HepG2 (cell line): ENCODE measurements at regions of chrX and their contacts with region 1.

Region 1: DNA sequence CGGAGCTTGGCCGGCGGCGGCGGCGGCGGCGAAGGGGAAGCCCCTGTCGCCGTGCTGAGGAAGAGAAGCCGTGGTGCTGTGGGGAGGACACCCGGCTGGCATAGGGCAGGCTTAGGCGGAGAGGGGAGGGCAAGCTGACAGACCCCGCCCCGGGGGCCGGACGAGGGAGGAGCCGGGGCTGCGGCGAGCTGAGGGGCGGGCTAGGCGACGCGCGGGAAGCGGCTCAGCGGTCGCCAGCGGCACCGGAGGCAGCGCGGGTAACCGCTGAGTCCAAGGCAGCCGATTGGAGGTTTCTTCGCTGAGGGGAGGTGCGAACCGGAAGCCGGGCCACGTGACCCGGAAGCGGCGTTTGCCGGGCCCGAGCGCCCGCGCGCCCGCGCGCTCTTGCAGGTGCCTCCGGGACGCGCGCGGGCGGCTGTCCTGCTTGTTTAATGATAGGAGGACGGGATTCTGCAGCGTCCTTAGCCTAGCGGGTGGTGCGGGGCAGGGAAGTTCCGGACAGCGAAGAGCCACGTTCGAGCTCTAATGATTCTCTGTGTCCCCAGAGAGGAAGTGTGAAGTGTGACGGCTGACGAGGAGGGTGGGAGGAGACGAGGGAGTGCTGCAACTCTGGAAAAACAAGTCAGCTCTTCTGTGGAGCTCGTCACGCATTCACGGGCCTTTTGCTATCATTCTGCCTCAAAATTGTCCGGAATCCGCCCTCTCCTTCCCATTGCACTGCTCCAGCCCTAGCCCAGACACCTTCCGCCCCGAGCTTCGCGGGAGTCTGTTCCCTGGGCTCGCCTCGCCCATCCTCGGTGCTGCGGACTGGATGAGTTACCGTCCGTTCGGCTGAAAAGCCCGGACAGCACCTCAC is at the start of gene AP1S2:
- DNase-seq: peak; percentile 80
- ATAC-seq: peak; percentile 97
- H3K4me3 ChIP-seq: peak within 1 kb of the TSS; percentile 67 to 74 (median 72)
- H3K27ac ChIP-seq: peak within 1 kb of the TSS; percentile 64
- H3K4me1 ChIP-seq: peaks cover 22% of the 10 kb centered on the region; the same call in 1 of the 2 replicates
- H3K27me3 ChIP-seq: peaks cover 0 to 3% of the 10 kb centered on the region in 2 experiments; a peak in 1 of 5 replicates
- CTCF ChIP-seq: no peak
- EP300 ChIP-seq: no peak
- POLR2A ChIP-seq: no peak; a peak in 1 of 4 replicates
- RAD21 ChIP-seq: no peak
- total RNA-seq, gene AP1S2: 18.8 and 22.7 TPM in 2 replicates

Region 2: DNA sequence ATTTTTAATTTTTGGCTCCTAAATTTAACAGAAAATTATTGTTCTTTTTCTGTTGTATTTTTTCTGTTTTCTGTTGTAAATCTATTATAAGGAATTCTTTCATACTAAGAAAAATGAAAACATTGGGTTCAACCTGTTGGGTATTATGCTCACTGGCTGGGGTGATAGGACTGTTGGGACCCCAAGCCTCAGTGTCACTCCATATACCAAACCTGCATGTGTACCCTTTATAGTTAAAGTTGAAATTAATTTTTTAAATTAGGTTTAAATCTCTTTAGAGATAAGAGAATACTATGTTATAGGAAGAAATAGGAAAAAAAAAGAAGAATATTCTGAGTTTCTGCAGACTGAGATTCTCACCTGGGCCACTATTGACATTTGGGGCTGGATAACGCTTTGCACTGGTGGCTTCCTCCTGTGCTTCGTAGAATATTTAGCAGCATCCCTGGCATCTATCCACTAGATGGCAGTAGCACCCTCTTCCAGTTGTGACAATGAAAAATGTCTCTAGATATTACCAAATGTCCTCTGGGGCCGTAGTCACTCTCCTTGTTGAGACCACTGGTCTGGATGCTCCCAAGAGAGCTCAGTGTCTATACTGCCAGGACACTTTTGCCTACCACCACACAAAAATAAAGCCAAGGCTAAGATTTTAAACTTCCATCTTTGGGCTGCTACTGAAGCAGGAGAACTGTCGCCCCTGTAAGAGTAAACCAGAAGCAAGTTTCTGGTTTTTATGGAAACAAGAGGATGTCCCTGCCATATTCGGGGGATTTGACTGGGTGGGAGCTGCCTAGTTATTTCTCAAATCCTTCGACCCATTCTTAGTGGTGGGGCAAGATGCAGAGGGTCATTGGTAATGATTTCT is 167.9 kb before region 1 on chrX:
- CTCF ChIA-PET with region 1: no interaction called
- POLR2A ChIA-PET with region 1: no interaction called
- in situ Hi-C with region 1: no loop called
- intact Hi-C with region 1: loop called (anchors 10 kb)
- DNase-seq: peak; percentile 46
- ATAC-seq: peak; percentile 80
- H3K4me3 ChIP-seq: no peak overlapping the region
- H3K27ac ChIP-seq: no peak overlapping the region
- H3K4me1 ChIP-seq: no peaks in the 10 kb centered on the region
- H3K27me3 ChIP-seq: no peaks in the 10 kb centered on the region
- CTCF ChIP-seq: peak; percentile 72
- EP300 ChIP-seq: no peak
- POLR2A ChIP-seq: no peak
- RAD21 ChIP-seq: 0 out of 2 replicates have a peak, but pooled peaks have one; percentile 23

Region 3: DNA sequence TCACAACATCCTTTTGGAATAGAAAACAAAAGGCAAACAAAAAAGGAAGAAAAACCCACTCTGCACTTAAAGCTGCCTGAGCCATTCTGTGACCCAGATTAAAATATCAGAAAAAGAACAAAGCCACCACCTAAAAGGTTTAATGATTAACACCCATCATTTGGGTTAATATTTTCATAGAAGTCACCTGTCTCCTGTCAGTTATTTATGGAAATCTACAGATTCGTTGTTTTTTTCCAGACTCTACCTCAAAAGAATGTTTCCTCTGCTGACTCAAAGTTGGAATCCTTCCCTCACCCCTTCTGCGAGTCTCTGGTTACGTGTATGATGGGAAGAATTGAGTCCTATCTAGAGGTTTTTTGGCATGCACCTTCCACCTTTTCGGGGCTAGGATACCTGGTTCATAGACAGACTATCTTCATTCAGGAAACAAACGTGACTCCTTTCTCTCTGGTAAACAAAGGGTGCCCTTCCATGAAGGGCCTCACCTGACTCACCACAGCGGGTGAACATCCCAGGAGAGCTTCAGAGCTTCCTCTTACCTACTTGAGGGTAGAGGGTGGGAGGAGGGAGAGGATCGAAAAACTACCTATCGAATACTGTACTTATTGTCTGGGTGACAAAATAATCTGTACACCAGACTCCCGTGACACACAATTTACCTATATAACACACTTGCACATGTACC is 136.5 kb before region 1 on chrX:
- CTCF ChIA-PET with region 1: no interaction called
- POLR2A ChIA-PET with region 1: no interaction called
- in situ Hi-C with region 1: no loop called
- intact Hi-C with region 1: no loop called
- DNase-seq: peak; percentile 1
- ATAC-seq: no peak
- H3K4me3 ChIP-seq: no peak overlapping the region
- H3K27ac ChIP-seq: no peak overlapping the region
- H3K4me1 ChIP-seq: no peaks in the 10 kb centered on the region
- H3K27me3 ChIP-seq: no peaks in the 10 kb centered on the region
- CTCF ChIP-seq: no peak
- EP300 ChIP-seq: no peak
- POLR2A ChIP-seq: no peak
- RAD21 ChIP-seq: no peak

Region 4: GRCh38 chrX:16113978-16114565 is 259.1 kb after region 1 on chrX:
- CTCF ChIA-PET with region 1: no interaction called
- POLR2A ChIA-PET with region 1: no interaction called
- in situ Hi-C with region 1: no loop called
- intact Hi-C with region 1: no loop called
- DNase-seq: no peak
- ATAC-seq: no peak
- H3K4me3 ChIP-seq: no peak overlapping the region
- H3K27ac ChIP-seq: no peak overlapping the region
- H3K4me1 ChIP-seq: no peaks in the 10 kb centered on the region
- H3K27me3 ChIP-seq: no peaks in the 10 kb centered on the region
- CTCF ChIP-seq: no peak
- EP300 ChIP-seq: no peak
- POLR2A ChIP-seq: no peak
- RAD21 ChIP-seq: no peak